ENCODE measurements at regions of chr9 and their contacts with region 1.

Region 1: GRCh38 chr9:2023532-2023931 is 8.4 kb downstream of the SMARCA2 start:
- DNase-seq: peak; percentile 39
- ATAC-seq: peak; percentile 58
- H3K4me3 Mint-ChIP-seq: peak overlapping the region; percentile 54
- H3K27ac Mint-ChIP-seq: peak overlapping the region; percentile 88
- H3K4me1 Mint-ChIP-seq: peaks cover 94% of the 10 kb centered on the region
- H3K27me3 Mint-ChIP-seq: no peaks in the 10 kb centered on the region

Region 2: DNA sequence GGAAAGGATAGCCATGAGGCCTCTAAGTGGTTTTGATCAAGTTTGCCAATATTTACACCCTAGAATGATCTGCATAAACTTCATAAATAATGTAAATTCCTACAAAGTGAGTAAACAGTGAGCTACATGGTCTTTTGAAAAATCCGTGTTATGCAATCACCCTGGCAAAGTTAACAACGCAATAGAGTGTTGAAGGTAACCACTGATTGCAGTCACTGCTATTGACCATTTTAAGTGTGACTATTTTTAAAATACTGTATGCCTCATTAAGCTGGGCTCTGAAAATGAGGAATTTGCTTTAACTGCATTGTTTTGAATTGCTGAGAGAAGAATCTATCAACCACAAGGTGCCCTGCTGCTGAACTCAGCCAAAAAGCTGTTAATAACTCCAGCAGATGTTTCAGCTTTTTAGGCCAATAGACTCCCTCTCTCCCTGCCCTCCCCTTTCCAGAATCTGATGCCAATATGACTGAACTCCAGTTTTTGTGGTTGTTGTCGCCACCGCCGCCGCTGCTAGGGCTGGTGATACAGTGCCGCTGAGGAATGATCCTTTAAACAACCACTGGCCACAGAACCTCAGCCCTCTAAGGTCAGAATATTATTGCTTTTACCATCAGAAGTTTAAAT is 43.7 kb before region 1 on chr9:
- CTCF ChIA-PET with region 1: no interaction called
- POLR2A ChIA-PET with region 1: no interaction called
- intact Hi-C with region 1: no loop called
- DNase-seq: no peak
- ATAC-seq: no peak
- H3K4me3 Mint-ChIP-seq: no peak overlapping the region
- H3K27ac Mint-ChIP-seq: no peak overlapping the region
- H3K4me1 Mint-ChIP-seq: no peaks in the 10 kb centered on the region
- H3K27me3 Mint-ChIP-seq: no peaks in the 10 kb centered on the region

Region 3: DNA sequence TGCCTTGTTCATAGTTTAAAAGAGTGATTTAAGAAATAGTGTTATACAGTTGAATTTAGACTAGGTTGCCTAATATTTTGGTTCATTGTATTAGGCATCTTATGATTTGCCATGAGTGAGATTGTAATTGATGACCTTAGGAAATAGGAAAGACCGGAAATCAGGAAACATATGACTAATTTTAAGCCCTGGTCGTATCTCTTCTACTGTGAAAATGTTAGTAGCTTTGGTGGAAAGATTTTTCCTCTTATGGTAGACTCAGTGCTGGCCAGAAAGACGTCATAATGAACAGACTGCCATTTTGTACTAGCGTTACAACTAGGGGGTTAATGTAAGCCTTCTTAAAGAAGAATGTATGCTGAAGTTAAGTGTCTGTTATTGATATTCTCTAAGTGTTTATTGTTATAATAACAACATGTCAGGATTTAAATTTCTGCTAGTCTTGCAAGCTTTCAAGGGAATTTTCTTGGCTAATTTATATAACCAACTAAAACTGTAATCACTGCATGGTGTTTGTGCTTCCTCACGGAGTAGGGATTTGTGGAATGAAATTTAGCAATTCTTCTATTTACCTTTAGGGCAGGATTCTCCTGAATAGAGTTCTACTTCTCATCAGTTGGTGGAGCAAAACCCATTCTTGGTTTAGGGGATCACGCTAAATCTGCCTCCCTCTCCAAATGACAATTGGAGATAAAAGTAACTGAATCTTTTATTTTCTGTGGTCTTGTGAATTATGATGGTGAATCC is 13.5 kb after region 1 on chr9:
- CTCF ChIA-PET with region 1: interaction called, 11 read pairs
- POLR2A ChIA-PET with region 1: interaction called, 3 read pairs
- intact Hi-C with region 1: loop called in 1 of 2 experiments (anchors 2 kb)
- DNase-seq: no peak
- ATAC-seq: no peak
- H3K4me3 Mint-ChIP-seq: no peak overlapping the region
- H3K27ac Mint-ChIP-seq: peak overlapping the region; percentile 72
- H3K4me1 Mint-ChIP-seq: peaks cover 42% of the 10 kb centered on the region
- H3K27me3 Mint-ChIP-seq: no peaks in the 10 kb centered on the region

Region 4: GRCh38 chr9:2043881-2044462 is 20.4 kb after region 1 on chr9:
- CTCF ChIA-PET with region 1: interaction called, 3 read pairs
- POLR2A ChIA-PET with region 1: interaction called, 4 read pairs
- intact Hi-C with region 1: loop called in 1 of 2 experiments (anchors 2 kb)
- DNase-seq: no peak
- ATAC-seq: peak; percentile 47
- H3K4me3 Mint-ChIP-seq: no peak overlapping the region
- H3K27ac Mint-ChIP-seq: peak overlapping the region; percentile 60
- H3K4me1 Mint-ChIP-seq: peaks cover 51% of the 10 kb centered on the region
- H3K27me3 Mint-ChIP-seq: no peaks in the 10 kb centered on the region

Region 5: DNA sequence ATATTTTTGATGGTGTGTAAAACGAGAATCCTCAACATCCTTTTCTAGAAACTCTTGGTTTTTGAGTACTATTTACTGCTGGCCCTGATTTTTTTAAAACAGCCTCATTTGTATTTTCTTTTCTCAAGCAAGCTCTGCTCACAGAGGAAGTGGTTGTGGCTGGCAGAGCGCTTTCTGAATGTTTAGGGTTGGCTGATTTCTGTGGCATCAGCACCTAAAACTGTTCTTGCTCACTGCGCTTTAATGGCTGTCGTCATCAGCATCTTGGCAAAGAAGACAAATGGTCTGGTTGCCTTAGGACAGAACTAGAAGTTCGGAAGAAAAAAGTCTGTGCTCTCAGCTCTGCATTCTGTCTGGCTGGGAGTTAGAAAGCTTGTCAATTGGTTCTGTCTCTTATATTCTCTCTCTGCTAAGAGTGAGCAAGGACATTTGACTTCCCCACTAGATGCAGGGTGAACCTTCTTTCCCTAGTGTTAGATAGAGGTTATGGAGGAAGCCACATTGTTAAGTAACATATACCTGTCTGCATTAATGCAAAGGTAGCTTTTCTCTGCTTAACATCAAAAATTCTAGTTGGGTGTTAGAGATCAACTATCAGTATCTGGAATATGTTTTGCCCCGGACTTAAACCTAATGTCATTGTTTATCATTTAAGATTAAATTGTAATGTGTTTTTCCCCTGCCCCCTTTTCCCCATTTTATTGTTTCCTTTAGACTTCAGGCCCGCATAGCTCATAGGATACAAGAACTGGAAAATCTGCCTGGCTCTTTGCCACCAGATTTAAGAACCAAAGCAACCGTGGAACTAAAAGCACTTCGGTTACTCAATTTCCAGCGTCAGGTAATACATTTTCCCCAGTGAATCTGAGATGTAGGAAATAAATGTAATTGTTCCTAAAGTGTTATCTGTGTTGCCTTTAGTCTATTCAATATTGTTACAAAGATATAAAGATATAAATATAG is 30.6 kb after region 1 on chr9:
- CTCF ChIA-PET with region 1: interaction called, 6 read pairs
- POLR2A ChIA-PET with region 1: interaction called, 3 read pairs
- intact Hi-C with region 1: loop called in 1 of 2 experiments (anchors 1 kb)
- DNase-seq: peak; percentile 85
- ATAC-seq: peak; percentile 91
- H3K4me3 Mint-ChIP-seq: peak overlapping the region; percentile 58
- H3K27ac Mint-ChIP-seq: peak overlapping the region; percentile 84
- H3K4me1 Mint-ChIP-seq: peaks cover 52% of the 10 kb centered on the region
- H3K27me3 Mint-ChIP-seq: no peaks in the 10 kb centered on the region

Region 6: DNA sequence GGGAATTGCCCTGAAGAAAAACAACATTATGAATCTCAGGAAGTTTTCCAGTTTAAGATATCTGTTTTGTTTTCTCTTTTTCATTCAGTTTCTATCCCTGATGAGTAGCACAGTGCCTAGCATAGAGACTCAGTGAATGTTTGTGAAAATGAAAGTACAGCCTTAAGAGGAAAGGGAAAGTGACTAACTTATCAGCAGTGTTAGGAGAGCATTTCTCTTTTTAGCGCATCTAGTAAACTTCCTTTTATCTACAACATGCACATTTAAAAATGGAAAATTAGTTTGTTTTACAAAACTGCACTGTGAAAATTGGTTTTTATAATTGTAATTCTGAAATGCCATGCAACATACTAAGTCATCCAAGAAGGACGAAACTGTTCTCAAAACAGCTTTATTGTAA is 102.4 kb after region 1 on chr9:
- CTCF ChIA-PET with region 1: no interaction called
- POLR2A ChIA-PET with region 1: no interaction called
- intact Hi-C with region 1: loop called in 1 of 2 experiments (anchors 5 kb)
- DNase-seq: no peak
- ATAC-seq: peak; percentile 100
- H3K4me3 Mint-ChIP-seq: peak overlapping the region; percentile 22
- H3K27ac Mint-ChIP-seq: peak overlapping the region; percentile 87
- H3K4me1 Mint-ChIP-seq: peaks cover 39% of the 10 kb centered on the region
- H3K27me3 Mint-ChIP-seq: no peaks in the 10 kb centered on the region